GM10248 (cell line): ENCODE measurements at regions of chr1 and their contacts with region 1.

Region 1: DNA sequence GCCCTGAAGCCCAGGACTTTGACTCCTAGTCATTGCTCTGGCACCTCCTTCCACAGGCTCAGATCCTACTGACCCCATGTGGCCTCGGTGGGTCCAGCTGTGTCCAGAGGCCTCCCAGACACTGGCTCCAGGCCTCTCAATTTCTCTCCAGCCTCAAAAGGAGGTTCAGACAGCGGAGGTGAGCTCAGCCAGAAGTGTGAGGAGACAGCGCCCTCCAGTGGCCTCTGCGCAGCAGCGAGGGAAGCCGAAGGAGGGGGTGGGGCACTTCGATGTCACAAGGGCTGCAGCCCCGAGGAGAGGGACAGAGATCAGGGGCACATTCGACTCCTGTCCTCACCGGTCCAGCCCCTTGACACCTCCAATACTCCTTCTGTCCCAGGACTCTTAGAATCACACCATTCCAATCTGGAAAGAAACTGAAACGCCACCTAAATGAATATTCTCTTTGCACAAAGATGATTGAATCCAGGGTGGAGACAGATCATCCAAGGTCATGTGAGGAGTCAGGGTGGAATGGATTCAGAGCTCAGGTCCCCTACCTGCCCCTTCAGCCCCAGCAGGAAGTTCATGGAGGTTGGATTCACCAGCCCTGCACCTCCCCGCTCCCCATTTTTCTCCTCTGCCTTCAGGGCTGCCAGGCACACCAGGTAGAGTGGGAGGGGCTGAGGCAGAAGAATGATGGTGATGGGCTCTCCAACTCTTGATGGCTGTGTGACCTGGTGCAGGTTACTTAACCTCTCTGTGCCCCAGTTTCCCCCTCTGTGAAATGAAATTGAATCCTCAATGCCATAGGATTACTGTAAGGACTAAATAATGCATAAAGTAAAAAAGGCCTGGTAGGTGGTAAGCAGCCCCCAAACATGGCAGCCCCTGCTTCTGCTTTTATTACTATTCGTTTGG is 34.8 kb upstream of the ZBTB40 start:
- DNase-seq: peak; percentile 80
- CTCF ChIP-seq: peak; percentile 97

Region 2: GRCh38 chr1:22105611-22106207 is 311.1 kb before region 1 on chr1:
- CTCF ChIA-PET with region 1: interaction called, 10 read pairs
- POLR2A ChIA-PET with region 1: no interaction called
- DNase-seq: peak; percentile 48
- CTCF ChIP-seq: peak; percentile 70

Region 3: DNA sequence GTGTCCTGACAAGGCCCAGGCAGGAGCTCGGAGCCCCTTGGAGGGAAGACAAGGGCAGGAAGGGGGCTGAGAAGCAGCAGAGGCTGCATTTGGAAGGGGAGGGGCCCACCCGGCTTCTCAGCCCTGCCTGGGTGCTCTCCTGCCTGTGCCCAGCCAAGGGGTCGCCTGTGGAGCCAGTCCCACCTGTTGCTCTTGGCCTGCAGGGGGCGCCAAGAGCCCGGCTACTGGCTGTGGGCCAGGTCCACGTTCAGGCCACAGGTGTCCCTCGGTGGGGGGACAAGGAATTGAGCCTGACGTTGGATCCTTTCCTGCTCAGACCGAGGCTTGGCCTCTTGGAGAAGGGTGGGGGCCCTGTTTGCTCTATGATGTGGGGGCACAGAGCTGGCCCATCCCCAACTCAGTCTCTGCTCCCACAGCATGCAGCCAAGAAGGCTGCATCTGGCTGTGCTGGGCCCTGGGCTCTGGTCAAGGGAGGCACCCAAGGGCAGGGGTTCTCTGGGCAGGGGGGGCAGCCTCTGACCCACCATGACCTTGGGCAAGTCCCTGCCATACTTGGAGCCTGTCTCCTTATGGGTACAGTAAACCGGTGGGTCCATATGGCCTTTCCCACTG is 284.8 kb before region 1 on chr1:
- CTCF ChIA-PET with region 1: interaction called, 49 read pairs
- POLR2A ChIA-PET with region 1: no interaction called
- DNase-seq: peak; percentile 86
- CTCF ChIP-seq: peak; percentile 91

Region 4: GRCh38 chr1:22142315-22143064 is 274.3 kb before region 1 on chr1:
- CTCF ChIA-PET with region 1: interaction called, 18 read pairs
- POLR2A ChIA-PET with region 1: no interaction called
- DNase-seq: peak; percentile 48
- CTCF ChIP-seq: no peak

Region 5: DNA sequence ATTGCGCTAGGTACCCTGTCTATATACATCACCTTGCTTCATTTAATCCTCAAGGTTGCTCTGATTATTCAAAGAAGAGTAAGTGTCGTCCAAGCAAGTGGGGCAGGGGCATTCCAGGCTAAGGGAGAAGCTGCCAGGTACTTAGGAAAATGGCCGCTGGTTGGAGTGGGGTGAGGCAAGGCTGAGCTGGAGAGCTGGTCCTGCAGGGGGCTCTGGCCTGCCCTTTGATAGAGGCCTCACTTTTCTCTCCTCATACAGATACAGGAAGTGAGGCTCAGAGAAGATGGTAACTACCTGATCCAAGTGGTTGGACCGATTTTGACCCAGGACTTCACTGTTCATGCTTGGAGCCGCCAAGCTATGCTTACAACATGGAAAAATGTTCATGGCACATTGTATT is 52.0 kb before region 1 on chr1:
- CTCF ChIA-PET with region 1: no interaction called
- POLR2A ChIA-PET with region 1: no interaction called
- DNase-seq: no peak
- CTCF ChIP-seq: no peak

Region 6: DNA sequence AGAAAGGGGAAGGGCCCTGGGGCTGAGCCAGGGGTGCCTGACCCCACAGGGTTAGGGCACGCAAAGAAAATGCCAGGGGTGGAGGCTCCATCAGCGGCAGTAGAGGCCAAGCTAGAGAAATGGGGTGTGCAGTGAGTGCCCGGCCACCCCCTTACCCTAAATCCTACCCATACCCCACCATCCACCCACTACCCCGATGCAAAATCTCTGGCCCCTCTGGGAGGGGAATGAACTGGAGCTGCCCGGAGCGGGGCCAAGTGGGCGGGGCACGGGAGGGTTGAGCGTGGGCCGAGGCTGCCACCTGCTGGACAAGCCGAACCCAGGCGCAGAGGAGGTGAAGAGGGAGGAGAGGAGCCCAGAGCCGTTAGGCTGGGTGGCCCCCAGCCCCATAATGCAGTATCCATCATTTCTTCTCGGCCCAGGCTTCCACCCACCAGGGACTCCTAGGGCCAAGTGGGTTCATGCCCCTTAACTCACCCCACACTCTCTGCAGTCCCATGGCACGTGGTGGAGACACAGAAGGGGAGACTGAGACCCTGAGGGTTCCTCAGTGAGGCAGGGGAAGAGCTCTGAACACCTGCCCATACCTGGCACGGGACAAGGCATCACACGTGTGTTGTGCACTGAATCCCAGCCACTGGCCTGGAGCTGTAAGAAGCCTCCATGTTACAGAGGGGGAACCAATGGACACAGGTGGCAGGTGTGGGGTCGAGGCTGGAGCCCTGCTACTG is 225.3 kb after region 1 on chr1:
- CTCF ChIA-PET with region 1: interaction called, 25 read pairs
- POLR2A ChIA-PET with region 1: no interaction called
- DNase-seq: peak; percentile 86
- CTCF ChIP-seq: peak; percentile 91